K562 (cell line): ENCODE measurements at regions of chr7 and their contacts with region 1.

Region 1: DNA sequence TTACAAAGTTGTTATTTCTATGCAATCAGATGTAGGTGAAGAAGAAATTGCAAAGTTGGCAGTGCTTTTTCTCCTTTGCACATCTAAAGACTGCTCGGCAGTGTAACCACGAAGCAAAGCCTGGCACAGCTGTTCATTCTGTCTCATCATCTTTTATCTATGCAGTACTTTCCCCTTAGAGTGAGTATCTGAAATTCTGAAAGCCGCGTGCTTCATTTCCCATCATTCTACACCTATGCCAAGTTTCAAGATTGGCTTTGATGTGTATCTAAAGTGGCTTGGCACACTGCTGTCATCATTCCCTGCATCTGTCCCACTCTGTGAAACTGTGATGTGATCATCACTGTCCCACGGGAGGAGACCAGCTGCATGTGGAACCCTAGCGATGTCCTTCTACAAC is 15.2 kb downstream of the SOSTDC1 start:
- DNase-seq: no peak
- ATAC-seq: no peak
- H3K4me3 ChIP-seq: no peak overlapping the region
- H3K27ac ChIP-seq: no peak overlapping the region
- H3K4me1 ChIP-seq: peaks cover 0 to 9% of the 10 kb centered on the region in 2 experiments; a peak in 3 of 5 replicates
- H3K27me3 ChIP-seq: no peaks in the 10 kb centered on the region
- CTCF ChIP-seq: no peak
- EP300 ChIP-seq: no peak
- POLR2A ChIP-seq: no peak
- RAD21 ChIP-seq: no peak

Region 2: DNA sequence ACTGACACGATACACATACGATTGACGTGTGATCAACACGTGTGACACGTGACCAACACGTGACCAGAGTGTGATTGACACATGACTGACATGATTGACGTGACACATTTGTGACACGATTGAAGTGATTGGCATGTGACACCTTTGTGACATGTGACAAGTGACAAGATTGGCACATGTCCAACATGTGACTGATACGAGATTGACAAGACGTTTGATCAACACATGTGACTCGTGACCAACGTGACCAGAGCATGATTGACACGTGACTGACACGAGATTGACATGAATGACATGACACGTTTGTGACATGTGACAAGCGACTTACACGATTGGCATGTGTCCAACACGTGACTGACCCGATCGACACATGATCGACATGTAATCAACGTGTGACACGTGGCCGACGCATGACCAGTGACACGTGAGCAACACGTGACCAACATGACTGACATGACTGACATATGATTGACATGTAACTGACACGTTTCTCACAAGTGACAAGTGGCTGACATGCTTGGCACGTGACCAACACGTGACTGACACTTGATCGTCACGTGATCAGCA is 51.0 kb before region 1 on chr7:
- CTCF ChIA-PET with region 1: no interaction called
- POLR2A ChIA-PET with region 1: no interaction called
- in situ Hi-C with region 1: no loop called
- intact Hi-C with region 1: no loop called
- DNase-seq: no peak
- ATAC-seq: no peak
- H3K4me3 ChIP-seq: no peak overlapping the region
- H3K27ac ChIP-seq: no peak overlapping the region; the same call in 2 of the 3 replicates
- H3K4me1 ChIP-seq: no peaks in the 10 kb centered on the region
- H3K27me3 ChIP-seq: no peaks in the 10 kb centered on the region; a peak in 1 of 5 replicates
- CTCF ChIP-seq: no peak
- EP300 ChIP-seq: no peak
- POLR2A ChIP-seq: 0 out of 2 replicates have a peak, but pooled peaks have one; percentile 11
- RAD21 ChIP-seq: no peak

Region 3: GRCh38 chr7:16465469-16466361 is 15.3 kb after region 1 on chr7 and contains the start of gene SOSTDC1:
- CTCF ChIA-PET with region 1: no interaction called
- POLR2A ChIA-PET with region 1: interaction called, 23 read pairs
- in situ Hi-C with region 1: no loop called
- intact Hi-C with region 1: no loop called
- DNase-seq: peak; percentile 16 to 78 (median 43)
- ATAC-seq: peak; percentile 91
- H3K4me3 ChIP-seq: peak within 1 kb of the TSS; percentile 45
- H3K27ac ChIP-seq: peak within 1 kb of the TSS; percentile 64
- H3K4me1 ChIP-seq: no peaks in the 10 kb centered on the region; a peak in 1 of 5 replicates
- H3K27me3 ChIP-seq: no peaks in the 10 kb centered on the region
- CTCF ChIP-seq: no peak
- EP300 ChIP-seq: no peak
- POLR2A ChIP-seq: peak; percentile 78
- RAD21 ChIP-seq: no peak; a peak in 1 of 4 replicates
- polyA plus RNA-seq, gene SOSTDC1: 47.5 to 48.6 TPM